Activated B cell treated with CpG ODN at 0.5 μM for 24 hours (primary cell): ENCODE measurements at regions of chr6 and their contacts with region 1.

Region 1: GRCh38 chr6:32868257-32868788 is 14.3 kb downstream of the PSMB9 start:
- DNase-seq: peak; percentile 70
- ATAC-seq: peak; percentile 66
- H3K4me3 Mint-ChIP-seq: no peak overlapping the region
- H3K27ac Mint-ChIP-seq: no peak overlapping the region
- H3K4me1 Mint-ChIP-seq: peaks cover 35% of the 10 kb centered on the region
- H3K27me3 Mint-ChIP-seq: no peaks in the 10 kb centered on the region
- CTCF ChIP-seq: peak; percentile 42

Region 2: GRCh38 chr6:31851485-31851832 is 1016.9 kb before region 1 on chr6:
- CTCF ChIA-PET with region 1: no interaction called
- POLR2A ChIA-PET with region 1: no interaction called
- intact Hi-C with region 1: no loop called
- DNase-seq: no peak
- ATAC-seq: no peak
- H3K4me3 Mint-ChIP-seq: no peak overlapping the region
- H3K27ac Mint-ChIP-seq: no peak overlapping the region
- H3K4me1 Mint-ChIP-seq: no peaks in the 10 kb centered on the region
- H3K27me3 Mint-ChIP-seq: no peaks in the 10 kb centered on the region
- CTCF ChIP-seq: no peak

Region 3: DNA sequence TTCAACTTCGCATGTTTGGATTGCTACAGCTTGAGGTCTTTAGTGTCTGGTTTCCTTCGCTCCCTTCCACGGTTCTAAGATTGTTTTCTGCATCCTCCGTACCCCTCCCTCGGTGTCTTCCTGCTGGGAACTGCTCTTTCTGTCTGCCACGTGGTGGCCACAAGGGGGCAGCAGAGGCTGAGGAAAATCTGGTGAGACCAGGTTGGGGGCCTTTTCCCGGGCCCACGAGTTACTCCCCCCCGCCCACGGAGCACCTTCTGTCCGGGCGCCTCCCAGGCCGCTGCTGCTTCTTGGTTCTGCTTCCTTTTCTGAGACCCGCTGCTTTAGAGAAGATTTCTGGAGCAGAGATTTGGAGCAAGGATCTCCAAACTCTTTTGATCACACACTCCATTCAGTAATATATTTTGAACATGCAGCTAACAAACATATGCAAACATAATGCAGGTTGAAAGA is 623.4 kb before region 1 on chr6:
- CTCF ChIA-PET with region 1: interaction called, 3 read pairs
- POLR2A ChIA-PET with region 1: no interaction called
- intact Hi-C with region 1: loop called (anchors 10 kb)
- DNase-seq: peak; percentile 77
- ATAC-seq: peak; percentile 91
- H3K4me3 Mint-ChIP-seq: peak overlapping the region; percentile 81
- H3K27ac Mint-ChIP-seq: peak overlapping the region; percentile 50
- H3K4me1 Mint-ChIP-seq: peaks cover 16% of the 10 kb centered on the region
- H3K27me3 Mint-ChIP-seq: no peaks in the 10 kb centered on the region
- CTCF ChIP-seq: no peak

Region 4: GRCh38 chr6:32666420-32667300 is 201.7 kb before region 1 on chr6 and contains the start of gene HLA-DQB1:
- CTCF ChIA-PET with region 1: interaction called, 6 read pairs
- POLR2A ChIA-PET with region 1: interaction called, 7 read pairs
- intact Hi-C with region 1: loop called (anchors 5 kb)
- DNase-seq: no peak
- ATAC-seq: peak; percentile 65
- H3K4me3 Mint-ChIP-seq: peak within 1 kb of the TSS; percentile 90
- H3K27ac Mint-ChIP-seq: peak within 1 kb of the TSS; percentile 94
- H3K4me1 Mint-ChIP-seq: peaks cover 65% of the 10 kb centered on the region
- H3K27me3 Mint-ChIP-seq: no peaks in the 10 kb centered on the region
- CTCF ChIP-seq: no peak
- total RNA-seq, gene HLA-DQB1: 262 and 310 TPM in 2 replicates

Region 5: DNA sequence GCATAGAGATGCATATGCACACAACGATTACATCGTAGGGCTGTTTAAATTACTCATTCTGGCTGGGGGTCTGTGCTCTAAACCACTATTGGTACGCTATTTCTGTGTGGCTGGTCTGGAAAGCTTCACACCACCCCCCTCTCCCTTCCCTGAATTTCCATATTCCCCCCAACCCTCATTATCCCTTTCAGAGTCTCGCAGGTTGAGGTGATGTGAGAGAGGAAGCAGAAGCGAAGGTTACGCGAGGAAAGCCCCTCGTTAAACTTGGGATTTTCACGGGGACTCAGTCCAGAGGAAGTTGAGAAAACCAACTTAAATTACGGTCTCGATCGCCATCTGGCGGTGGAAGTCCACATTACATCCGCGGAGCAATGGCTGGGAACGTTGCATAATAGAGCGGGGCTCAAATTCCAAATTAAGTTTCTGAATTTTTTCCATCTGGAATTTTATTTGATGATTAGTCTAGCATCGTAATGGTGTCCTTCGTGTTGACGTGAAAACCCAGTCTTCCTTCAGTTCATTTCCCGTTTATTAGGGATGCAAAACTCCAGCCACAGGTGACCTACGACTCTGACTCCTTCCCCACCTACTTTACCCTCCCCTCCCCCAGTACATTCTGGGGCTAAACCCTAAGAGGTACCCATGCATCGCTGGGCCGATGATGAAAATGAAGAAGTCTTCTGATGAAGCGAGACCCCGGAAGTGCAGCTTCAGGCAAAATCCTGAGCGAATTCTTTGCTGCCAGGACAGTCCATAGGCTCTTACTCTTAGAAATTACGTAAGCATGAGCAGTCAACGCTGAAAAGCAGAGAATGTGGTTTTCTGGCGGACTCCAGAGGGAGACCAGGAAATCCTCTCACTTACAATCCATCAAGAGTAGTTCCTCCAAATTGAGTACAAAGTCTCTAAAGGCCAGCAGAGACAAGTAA is 71.2 kb before region 1 on chr6:
- CTCF ChIA-PET with region 1: interaction called, 13 read pairs
- POLR2A ChIA-PET with region 1: interaction called, 6 read pairs
- intact Hi-C with region 1: loop called (anchors 1 kb)
- DNase-seq: peak; percentile 82
- ATAC-seq: peak; percentile 87
- H3K4me3 Mint-ChIP-seq: peak overlapping the region; percentile 82
- H3K27ac Mint-ChIP-seq: peak overlapping the region; percentile 95
- H3K4me1 Mint-ChIP-seq: peaks cover 40% of the 10 kb centered on the region
- H3K27me3 Mint-ChIP-seq: no peaks in the 10 kb centered on the region
- CTCF ChIP-seq: peak; percentile 91

Region 6: DNA sequence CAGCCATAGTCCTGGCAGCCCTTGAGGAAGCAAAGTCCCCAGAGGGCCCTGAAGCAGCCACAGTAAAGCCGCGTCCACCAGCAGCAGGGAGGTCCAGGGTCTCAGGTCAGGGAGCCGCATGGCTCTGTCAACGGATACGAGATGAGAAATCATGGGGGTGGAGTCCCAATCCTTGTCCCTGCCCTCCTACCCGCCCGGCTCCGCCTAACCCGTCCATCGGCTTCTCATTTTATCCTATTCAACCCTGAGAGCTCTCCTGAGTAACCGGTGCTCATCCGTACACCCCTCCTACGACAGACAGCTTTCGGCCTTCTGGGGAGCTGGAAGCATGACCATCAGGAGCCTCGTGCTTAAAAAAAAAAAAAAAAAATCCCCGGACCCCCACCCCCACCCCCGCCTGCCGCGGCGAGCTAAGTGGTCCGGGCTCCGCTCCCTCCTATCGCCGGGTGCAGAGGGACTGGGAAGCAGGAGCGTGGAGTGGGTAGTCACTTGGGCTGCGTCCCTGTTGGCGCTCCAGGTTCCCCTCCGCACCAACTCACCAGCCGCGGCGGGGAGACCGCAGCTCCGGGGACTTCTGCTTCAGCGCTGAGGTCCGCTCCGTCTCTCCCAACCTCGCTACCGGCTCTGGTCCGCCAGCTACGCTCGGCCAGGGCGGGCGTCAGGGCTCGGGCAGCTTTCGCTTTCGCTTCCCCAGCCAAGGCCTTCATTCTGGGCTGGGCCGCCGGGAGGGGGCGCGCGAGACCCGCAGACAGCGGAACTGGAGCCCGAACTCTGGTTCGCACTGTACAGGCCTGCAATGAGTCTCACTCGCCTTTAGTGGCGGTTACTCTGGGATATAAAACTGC is 30.0 kb before region 1 on chr6 and contains the start of gene TAP2:
- CTCF ChIA-PET with region 1: interaction called, 198 read pairs
- POLR2A ChIA-PET with region 1: interaction called, 904 read pairs
- intact Hi-C with region 1: loop called (anchors 1 kb)
- DNase-seq: peak; percentile 98
- ATAC-seq: peak; percentile 82
- H3K4me3 Mint-ChIP-seq: peak within 1 kb of the TSS; percentile 92
- H3K27ac Mint-ChIP-seq: peak within 1 kb of the TSS; percentile 100
- H3K4me1 Mint-ChIP-seq: peaks cover 91% of the 10 kb centered on the region
- H3K27me3 Mint-ChIP-seq: no peaks in the 10 kb centered on the region
- CTCF ChIP-seq: peak; percentile 23
- total RNA-seq, gene TAP2: 141 and 172 TPM in 2 replicates

Region 7: GRCh38 chr6:32947552-32948465 is 79.5 kb after region 1 on chr6:
- CTCF ChIA-PET with region 1: interaction called, 14 read pairs
- POLR2A ChIA-PET with region 1: interaction called, 16 read pairs
- intact Hi-C with region 1: no loop called
- DNase-seq: no peak
- ATAC-seq: no peak
- H3K4me3 Mint-ChIP-seq: peak overlapping the region; percentile 98
- H3K27ac Mint-ChIP-seq: peak overlapping the region; percentile 99
- H3K4me1 Mint-ChIP-seq: peaks cover 94% of the 10 kb centered on the region
- H3K27me3 Mint-ChIP-seq: no peaks in the 10 kb centered on the region
- CTCF ChIP-seq: no peak

Region 8: GRCh38 chr6:33192105-33192646 is 323.9 kb after region 1 on chr6 and contains the start of gene COL11A2:
- CTCF ChIA-PET with region 1: no interaction called
- POLR2A ChIA-PET with region 1: no interaction called
- intact Hi-C with region 1: no loop called
- DNase-seq: no peak
- ATAC-seq: peak; percentile 59
- H3K4me3 Mint-ChIP-seq: peak within 1 kb of the TSS; percentile 82
- H3K27ac Mint-ChIP-seq: no peak within 1 kb of the TSS
- H3K4me1 Mint-ChIP-seq: peaks cover 27% of the 10 kb centered on the region
- H3K27me3 Mint-ChIP-seq: peaks cover 29% of the 10 kb centered on the region
- CTCF ChIP-seq: no peak
- total RNA-seq, gene COL11A2: 0.32 and 0.47 TPM in 2 replicates

Region 9: DNA sequence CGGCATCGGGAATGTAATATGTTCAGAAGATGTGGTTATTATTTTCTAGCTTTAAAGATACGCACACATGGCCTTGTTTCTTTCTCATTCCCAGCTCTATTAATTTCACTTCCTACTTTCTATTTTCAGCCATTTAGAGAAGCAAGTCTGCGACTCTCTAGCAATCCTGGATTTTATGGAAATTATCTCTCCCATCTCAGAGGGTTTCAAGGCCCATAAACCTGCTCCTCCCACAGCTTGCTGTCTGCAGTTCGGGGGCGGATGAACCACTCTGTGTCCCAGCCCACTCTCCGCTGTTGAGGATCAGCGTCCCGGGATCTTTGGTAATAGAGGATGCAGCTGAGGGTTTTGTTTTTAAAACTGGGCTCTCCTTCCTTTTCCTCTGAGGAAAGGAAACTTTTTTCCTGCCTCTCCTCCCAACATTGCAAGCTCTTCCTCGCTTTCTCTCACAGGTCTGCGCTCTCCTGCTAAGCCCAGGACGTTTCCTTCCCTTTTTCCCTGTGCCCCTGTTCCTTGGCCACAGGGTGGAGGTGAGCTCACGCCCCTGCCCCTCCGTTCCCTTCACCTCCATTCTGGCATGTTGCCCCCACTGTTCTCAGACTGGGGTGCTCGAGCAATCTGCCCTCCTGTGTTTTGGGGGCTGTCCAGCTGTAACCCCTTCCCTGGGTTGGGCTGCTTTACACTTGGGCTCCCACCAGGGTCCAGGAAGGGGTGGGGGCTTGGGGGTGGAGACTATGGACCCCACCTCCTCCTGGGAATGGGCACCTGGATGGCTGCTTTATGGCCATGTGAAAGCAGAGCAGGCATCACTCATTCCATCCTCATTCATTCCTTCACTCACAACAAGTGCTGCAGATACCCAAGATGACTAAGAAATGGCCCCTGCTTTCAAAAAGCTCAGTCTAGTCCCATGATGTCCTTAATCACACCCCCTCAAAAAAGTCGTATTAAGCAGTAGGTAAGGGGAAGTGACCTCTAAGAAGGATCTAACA is 640.9 kb after region 1 on chr6:
- CTCF ChIA-PET with region 1: no interaction called
- POLR2A ChIA-PET with region 1: no interaction called
- intact Hi-C with region 1: no loop called
- DNase-seq: no peak
- ATAC-seq: peak; percentile 18
- H3K4me3 Mint-ChIP-seq: peak overlapping the region; percentile 9
- H3K27ac Mint-ChIP-seq: no peak overlapping the region
- H3K4me1 Mint-ChIP-seq: peaks cover 17% of the 10 kb centered on the region
- H3K27me3 Mint-ChIP-seq: peaks cover 6% of the 10 kb centered on the region
- CTCF ChIP-seq: no peak